IMR-90 (cell line): ENCODE measurements at regions of chr11 and their contacts with region 1.

Region 1: DNA sequence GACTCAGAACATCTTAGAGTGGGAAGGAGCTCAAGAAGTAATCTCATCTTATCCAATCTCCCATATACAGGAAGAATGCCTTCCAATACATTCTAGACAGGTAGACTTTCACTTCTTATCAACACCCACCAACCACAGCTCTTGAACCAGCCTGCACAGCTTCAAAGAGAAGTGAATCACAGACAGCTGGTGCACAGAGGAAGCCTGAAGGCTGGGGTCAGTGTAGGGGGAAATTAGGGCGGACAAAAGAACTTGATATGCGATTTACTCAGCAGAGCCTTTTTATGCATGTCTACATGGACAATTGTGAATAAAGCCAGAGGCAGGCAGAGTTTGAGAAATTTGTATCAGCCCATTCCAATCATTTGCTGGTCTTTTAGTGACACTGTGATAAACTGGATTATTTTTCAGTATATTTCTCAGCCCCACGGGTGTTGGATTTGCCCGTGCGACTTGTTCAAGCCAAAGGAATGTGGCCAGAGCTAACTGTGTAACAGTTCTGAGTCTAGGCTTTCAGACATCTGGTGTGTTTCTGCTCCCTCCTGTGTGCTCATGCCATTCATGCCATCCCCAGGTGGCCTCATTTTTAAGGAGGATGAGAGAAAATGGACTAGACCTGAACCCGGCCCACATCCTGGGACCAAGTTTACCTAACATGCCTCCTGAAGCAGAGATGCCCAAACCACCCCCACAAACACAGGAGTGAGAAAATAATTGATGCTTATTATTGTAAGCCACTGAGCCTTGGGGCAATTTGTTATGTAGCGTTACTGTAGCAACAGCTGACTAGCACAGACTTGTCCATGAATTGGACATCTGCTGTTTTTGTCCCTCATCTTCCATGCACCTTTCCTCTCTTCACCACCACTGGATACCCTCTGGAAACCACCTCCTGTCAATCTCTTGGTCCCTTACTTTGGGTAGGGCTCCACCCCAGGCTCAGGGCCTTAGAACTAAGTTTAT is 137.5 kb upstream of the HSD17B12 start:
- DNase-seq: no peak
- ATAC-seq: no peak
- H3K4me3 ChIP-seq: no peak overlapping the region
- H3K27ac ChIP-seq: no peak overlapping the region
- H3K4me1 ChIP-seq: no peaks in the 10 kb centered on the region
- H3K27me3 ChIP-seq: peaks cover 22% of the 10 kb centered on the region
- CTCF ChIP-seq: no peak
- POLR2A ChIP-seq: no peak
- RAD21 ChIP-seq: no peak

Region 2: DNA sequence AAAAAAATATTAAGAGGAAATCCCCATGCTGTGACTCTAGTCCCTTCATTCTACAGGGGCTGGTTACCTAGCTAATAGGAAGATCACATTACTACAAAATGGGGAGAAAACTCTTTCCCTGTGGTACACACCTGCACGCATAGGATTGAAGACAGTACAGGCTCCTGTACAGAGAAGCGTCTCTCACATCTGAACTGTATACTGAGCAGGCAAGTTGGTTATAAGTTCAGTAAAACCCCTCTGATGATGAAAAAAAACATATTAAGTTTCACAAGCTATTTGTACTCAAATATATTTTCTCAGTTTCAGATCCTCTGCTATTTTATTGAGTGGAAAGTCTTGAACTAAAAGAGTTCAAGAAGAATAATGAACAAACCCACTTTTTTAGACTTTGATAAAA is 19.4 kb before region 1 on chr11:
- CTCF ChIA-PET with region 1: no interaction called
- POLR2A ChIA-PET with region 1: no interaction called
- dilution Hi-C with region 1: no loop called
- in situ Hi-C with region 1: no loop called
- intact Hi-C with region 1: loop called (anchors 2 kb)
- DNase-seq: no peak
- ATAC-seq: no peak
- H3K4me3 ChIP-seq: no peak overlapping the region
- H3K27ac ChIP-seq: no peak overlapping the region
- H3K4me1 ChIP-seq: no peaks in the 10 kb centered on the region
- H3K27me3 ChIP-seq: no peaks in the 10 kb centered on the region
- CTCF ChIP-seq: no peak
- POLR2A ChIP-seq: no peak
- RAD21 ChIP-seq: no peak